ENCODE measurements at regions of chr14 and their contacts with region 1.

Region 1: GRCh38 chr14:101628471-101628966 is 67.2 kb downstream of the DIO3 start:
- DNase-seq: no peak
- H3K4me3 ChIP-seq: peak overlapping the region in 3 of 4 donors; percentile 13 to 53 (median 33)
- H3K27ac ChIP-seq: no peak overlapping the region
- H3K4me1 ChIP-seq: peaks cover 0 to 15% (median 7%) of the 10 kb centered on the region in 3 donors
- H3K27me3 ChIP-seq: peaks cover 0 to 4% (median 0%) of the 10 kb centered on the region in 4 donors
- CTCF ChIP-seq: peak; percentile 96 to 99 (median 98)
- POLR2A ChIP-seq: no peak

Region 2: GRCh38 chr14:100850841-100851585 is 777.5 kb before region 1 on chr14:
- intact Hi-C with region 1: loop called (anchors 10 kb)
- DNase-seq: no peak
- H3K4me3 ChIP-seq: no peak overlapping the region
- H3K27ac ChIP-seq: no peak overlapping the region
- H3K4me1 ChIP-seq: peaks cover 0 to 18% (median 0%) of the 10 kb centered on the region in 3 donors
- H3K27me3 ChIP-seq: no peaks in the 10 kb centered on the region
- CTCF ChIP-seq: peak; percentile 51 to 87 (median 81)
- POLR2A ChIP-seq: no peak